ENCODE measurements at regions of chr12 and their contacts with region 1.

Region 1: GRCh38 chr12:31272607-31273225 is 53.2 kb downstream of the SINHCAF start:
- DNase-seq: no peak
- H3K4me3 ChIP-seq: no peak overlapping the region
- H3K27ac ChIP-seq: no peak overlapping the region
- H3K27me3 ChIP-seq: no peaks in the 10 kb centered on the region
- CTCF ChIP-seq: no peak

Region 2: DNA sequence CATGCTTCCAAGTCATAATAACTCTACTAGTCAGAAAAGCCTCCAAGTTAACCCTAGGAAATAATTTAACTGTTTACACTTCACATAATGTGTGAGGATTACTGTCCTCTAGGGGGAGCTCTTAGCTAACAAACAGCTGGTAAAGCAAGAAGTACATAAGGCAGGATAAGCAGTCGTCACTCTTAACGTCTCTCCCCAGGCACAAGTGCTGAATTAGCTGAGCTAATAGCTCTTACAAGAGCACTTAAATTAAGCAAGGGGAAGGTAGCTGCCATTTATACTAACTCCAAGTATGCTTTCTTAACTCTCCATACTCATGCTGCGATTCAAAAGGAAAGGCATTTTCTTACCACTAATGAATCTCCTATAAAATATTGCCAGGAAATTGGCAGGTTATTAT is 425.5 kb before region 1 on chr12:
- CTCF ChIA-PET with region 1: interaction called, 63 read pairs
- POLR2A ChIA-PET with region 1: no interaction called
- DNase-seq: peak; percentile 8
- H3K4me3 ChIP-seq: no peak overlapping the region
- H3K27ac ChIP-seq: no peak overlapping the region
- H3K27me3 ChIP-seq: peaks cover 3% of the 10 kb centered on the region
- CTCF ChIP-seq: peak; percentile 71

Region 3: DNA sequence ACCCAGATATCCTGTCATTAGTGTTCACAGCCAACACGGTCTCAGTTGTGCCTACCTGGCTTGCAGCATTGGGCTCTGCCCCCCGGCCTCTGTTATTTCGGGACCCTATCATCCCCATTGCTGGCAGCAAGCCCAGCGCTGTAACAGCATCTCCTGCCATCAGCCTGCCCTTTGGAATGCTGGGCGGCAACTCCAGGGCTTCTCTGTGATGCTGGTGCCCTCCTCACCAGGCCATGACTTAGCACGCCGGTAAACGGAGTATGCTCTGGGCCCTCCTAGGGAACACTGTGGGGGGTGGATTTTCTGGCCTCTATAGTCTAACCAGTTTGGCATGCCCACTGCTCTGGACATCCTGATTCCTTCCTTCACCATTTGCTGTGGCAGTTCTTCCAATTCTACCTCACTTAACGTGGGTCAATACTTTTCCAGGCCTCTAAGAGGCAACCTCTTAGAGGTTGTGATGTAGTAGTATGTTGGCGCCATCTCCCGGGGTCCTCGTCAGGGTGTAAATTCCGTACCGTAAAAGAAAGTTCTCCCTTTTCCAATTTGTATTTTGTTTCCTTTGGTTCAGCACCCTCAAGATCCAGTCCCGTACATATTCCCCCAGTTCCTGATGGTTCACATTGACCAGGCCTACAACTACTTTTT is 26.8 kb before region 1 on chr12:
- CTCF ChIA-PET with region 1: interaction called, 87 read pairs
- POLR2A ChIA-PET with region 1: no interaction called
- DNase-seq: no peak
- H3K4me3 ChIP-seq: no peak overlapping the region
- H3K27ac ChIP-seq: no peak overlapping the region
- H3K27me3 ChIP-seq: peaks cover 11% of the 10 kb centered on the region
- CTCF ChIP-seq: peak; percentile 11; the same call in 1 of the 2 replicates

Region 4: DNA sequence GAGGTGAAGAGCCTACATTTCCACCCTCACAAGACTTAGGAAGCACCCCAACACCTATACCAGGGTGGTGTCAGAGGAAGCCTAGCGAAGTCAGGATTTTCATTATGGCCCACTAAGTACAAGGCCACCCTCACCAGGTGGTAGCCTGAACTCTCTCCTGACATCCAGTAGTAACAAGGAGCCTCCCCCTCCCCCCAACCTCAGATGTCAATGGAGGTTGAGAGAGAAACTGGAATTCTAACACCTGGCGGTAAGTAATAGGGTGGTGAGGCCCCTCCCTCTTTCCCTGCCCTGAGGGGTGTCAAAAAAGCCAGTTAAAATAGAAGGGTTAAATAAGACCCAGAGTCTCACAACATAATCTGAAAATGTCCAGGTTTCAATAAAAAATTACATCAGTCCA is 15.7 kb after region 1 on chr12:
- CTCF ChIA-PET with region 1: interaction called, 60 read pairs
- POLR2A ChIA-PET with region 1: interaction called, 5 read pairs
- DNase-seq: no peak
- H3K4me3 ChIP-seq: no peak overlapping the region
- H3K27ac ChIP-seq: no peak overlapping the region
- H3K27me3 ChIP-seq: no peaks in the 10 kb centered on the region
- CTCF ChIP-seq: no peak

Region 5: GRCh38 chr12:31317471-31318395 is 45.0 kb after region 1 on chr12:
- CTCF ChIA-PET with region 1: interaction called, 18 read pairs
- POLR2A ChIA-PET with region 1: no interaction called
- DNase-seq: no peak
- H3K4me3 ChIP-seq: peak overlapping the region; percentile 50
- H3K27ac ChIP-seq: no peak overlapping the region
- H3K27me3 ChIP-seq: no peaks in the 10 kb centered on the region
- CTCF ChIP-seq: no peak

Region 6: GRCh38 chr12:31337952-31338351 is 65.2 kb after region 1 on chr12:
- CTCF ChIA-PET with region 1: no interaction called
- POLR2A ChIA-PET with region 1: no interaction called
- DNase-seq: no peak
- H3K4me3 ChIP-seq: no peak overlapping the region
- H3K27ac ChIP-seq: no peak overlapping the region
- H3K27me3 ChIP-seq: peaks cover 9% of the 10 kb centered on the region
- CTCF ChIP-seq: no peak